ENCODE measurements at regions of chr6 and their contacts with region 1.

Region 1: DNA sequence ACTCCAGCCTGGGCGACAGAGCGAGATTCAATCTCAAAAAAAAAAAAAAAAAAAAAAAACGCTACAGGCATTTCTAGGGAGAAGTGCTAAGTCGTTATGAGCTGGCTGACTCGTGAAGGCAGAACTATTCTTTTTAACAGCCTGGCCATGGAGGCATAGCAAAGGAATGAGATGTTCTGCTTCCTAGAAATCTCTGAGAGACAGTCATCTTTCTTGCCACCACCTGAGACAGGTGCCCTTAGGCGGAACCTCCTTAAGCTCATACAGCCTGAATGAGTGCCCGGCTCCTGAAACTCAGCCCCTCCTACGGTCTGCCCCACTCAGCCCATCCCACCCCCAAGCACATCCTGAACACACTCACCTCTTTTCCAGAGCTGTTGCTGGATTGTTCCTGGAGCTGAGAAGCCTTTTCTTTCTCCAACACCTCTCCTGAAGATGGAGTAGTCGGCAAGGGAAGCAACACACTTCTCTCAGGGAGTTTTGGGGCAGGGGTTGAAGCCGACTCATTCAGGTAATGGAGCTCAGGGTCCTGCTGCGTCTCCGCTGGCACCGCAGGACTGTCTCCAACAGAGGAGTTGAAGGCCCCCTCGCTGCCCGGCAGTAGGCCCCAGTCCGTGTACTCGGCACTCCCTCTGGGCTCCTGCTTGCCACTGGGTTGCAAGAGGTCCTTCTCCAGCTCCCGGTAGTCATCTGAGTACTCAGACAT is 50.3 kb downstream of the KIAA0319 start:
- DNase-seq: no peak
- H3K4me3 ChIP-seq: no peak overlapping the region
- H3K27ac ChIP-seq: no peak overlapping the region
- H3K4me1 ChIP-seq: no peaks in the 10 kb centered on the region
- H3K27me3 ChIP-seq: no peaks in the 10 kb centered on the region
- CTCF ChIP-seq: no peak
- POLR2A ChIP-seq: no peak

Region 2: DNA sequence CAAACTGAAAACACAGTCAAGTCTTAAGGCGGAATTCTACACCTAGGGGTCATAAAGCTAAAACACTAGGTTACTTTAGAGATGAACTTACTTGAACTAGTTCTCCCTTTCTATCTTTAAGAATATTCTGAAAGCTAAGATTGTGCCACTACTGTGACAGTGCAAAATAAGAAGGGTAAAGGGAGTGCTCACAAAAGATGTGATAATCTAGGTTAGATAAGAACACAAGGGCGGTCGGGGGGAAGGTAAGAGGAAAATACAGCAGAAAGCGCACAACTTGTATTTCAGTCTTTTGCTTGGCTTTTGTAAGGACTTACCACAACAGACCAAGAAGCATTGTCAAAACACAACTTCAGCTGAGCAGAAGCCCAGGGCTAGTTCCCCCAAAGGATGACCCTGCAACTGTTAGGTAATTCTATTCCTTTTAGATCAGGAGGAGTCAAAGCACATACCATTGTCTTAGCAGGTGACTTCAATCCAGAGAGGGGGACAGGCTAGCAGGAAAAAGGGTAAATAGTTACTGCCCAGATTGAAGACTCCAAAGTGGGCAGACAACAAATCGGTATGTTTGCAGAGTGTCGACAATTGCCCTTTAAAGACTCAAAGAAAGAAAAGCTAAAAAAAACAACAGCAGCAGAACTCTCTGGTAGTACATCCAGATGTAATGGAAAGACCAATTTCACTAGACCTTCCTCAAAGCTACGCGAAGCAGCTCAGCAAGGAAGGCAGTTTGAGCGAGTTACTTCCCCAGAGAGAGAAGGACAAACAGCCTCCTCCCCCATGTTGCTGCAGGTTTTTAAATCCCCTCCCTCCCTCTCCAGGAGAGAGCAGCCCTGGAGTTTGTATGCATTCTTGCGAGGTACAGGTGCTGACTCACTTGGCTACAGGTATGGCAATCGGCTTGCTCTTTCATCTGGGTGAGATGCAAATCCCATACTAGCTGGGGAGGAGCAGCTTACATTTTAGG is 281.1 kb after region 1 on chr6:
- intact Hi-C with region 1: no loop called
- DNase-seq: no peak
- H3K4me3 ChIP-seq: no peak overlapping the region
- H3K27ac ChIP-seq: no peak overlapping the region
- H3K4me1 ChIP-seq: no peaks in the 10 kb centered on the region
- H3K27me3 ChIP-seq: no peaks in the 10 kb centered on the region
- CTCF ChIP-seq: no peak
- POLR2A ChIP-seq: no peak

Region 3: GRCh38 chr6:25971187-25971811 is 1375.6 kb after region 1 on chr6:
- intact Hi-C with region 1: loop called (anchors 5 kb)
- DNase-seq: peak in 1 of 2 donors; percentile 67
- H3K4me3 ChIP-seq: no peak overlapping the region
- H3K27ac ChIP-seq: peak overlapping the region; percentile 66 to 85
- H3K4me1 ChIP-seq: peaks cover 0 to 13% of the 10 kb centered on the region in 2 donors
- H3K27me3 ChIP-seq: no peaks in the 10 kb centered on the region
- CTCF ChIP-seq: no peak
- POLR2A ChIP-seq: no peak

Measured in breast epithelium (tissue), 4 donors.